ENCODE measurements at regions of chr17 and their contacts with region 1.

Region 1: GRCh38 chr17:8073627-8074484 is 13.7 kb downstream of the ALOX12B start:
- DNase-seq: peak; percentile 78
- H3K4me3 Mint-ChIP-seq: no peak overlapping the region
- H3K27ac Mint-ChIP-seq: no peak overlapping the region
- H3K4me1 Mint-ChIP-seq: peaks cover 28% of the 10 kb centered on the region
- H3K27me3 Mint-ChIP-seq: peaks cover 53% of the 10 kb centered on the region
- CTCF ChIP-seq: peak; percentile 60

Region 2: DNA sequence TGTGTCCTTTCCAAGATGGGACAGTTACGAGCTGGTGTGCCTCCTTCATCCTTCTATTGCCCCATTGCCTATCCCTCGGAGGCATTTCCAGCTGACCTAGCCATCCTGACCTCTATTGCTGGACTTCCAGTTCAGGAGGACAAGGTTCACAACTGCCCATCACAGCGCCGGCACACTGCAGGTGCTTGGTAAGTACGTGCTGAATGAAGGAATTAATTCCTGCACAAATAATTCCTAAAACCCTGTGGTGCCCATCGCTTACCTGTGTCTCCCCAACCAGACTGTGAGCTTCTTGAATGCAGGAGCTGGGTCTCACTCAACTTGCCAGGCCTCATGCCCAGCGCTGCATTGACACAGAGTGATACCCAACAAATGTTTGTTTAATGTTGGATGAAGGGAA is 22.0 kb before region 1 on chr17:
- CTCF ChIA-PET with region 1: interaction called, 10 read pairs
- intact Hi-C with region 1: no loop called
- DNase-seq: no peak
- H3K4me3 Mint-ChIP-seq: no peak overlapping the region
- H3K27ac Mint-ChIP-seq: no peak overlapping the region
- H3K4me1 Mint-ChIP-seq: peaks cover 5% of the 10 kb centered on the region
- H3K27me3 Mint-ChIP-seq: peaks cover 17% of the 10 kb centered on the region
- CTCF ChIP-seq: no peak

Region 3: DNA sequence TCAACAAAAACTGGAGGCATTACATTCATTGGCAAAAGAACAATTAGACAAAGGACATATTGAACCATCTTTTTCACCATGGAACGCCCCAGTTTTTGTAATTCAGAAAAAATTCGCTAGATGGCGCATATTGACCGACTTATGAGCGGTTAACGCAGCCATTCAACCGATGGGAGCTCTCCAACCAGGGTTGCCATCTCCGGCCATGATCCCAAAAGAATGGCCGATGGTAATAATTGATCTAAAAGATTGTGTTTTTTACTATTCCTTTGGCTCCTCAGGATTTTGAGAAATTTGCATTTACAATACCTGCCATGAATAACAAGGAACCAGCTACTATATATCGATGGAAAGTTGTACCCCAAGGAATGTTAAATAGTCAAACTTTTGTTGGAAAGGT is 13.6 kb before region 1 on chr17:
- CTCF ChIA-PET with region 1: interaction called, 12 read pairs
- intact Hi-C with region 1: no loop called
- DNase-seq: peak; percentile 67
- H3K4me3 Mint-ChIP-seq: no peak overlapping the region
- H3K27ac Mint-ChIP-seq: no peak overlapping the region
- H3K4me1 Mint-ChIP-seq: peaks cover 25% of the 10 kb centered on the region
- H3K27me3 Mint-ChIP-seq: peaks cover 75% of the 10 kb centered on the region
- CTCF ChIP-seq: peak; percentile 23

Region 4: DNA sequence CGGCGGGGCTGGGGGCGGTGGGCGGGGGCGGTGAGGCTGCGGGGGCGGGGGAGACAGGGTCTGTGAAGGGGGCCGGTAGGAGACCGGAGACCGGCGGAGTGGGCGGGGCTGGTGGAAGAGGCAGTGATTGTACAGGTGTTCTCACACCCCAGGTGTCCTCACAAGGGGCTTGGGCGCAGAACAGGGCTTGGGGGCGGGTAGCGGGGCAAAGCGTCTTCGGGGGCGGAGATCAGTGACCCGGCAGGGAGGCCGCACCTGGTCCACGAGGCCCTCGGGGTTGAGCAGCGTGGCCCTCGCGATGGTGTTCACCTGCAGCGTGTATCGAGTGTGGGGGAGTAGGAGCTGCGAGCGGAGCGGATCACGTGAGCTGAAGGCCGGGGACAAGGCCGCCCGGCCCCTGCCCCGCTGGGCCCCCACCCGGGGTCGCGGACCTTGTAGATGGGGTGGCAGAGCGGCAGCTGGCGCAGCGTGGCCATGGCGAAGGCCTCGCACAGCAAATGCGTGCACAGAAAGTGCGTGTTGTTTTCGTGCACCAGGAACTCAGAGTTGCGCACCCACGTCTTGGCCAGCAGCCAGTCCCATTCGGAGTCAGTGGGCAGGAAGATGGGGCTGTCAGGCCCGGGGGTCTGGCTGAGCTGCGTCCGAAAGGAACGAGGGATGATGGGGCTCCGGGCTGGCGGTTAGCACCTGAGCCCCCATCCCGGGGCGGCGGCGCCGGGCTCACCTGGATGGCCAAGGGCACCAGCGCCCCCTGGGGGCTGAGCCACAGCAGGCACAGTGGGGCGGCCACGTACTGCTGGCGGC is 36.0 kb after region 1 on chr17:
- CTCF ChIA-PET with region 1: interaction called, 10 read pairs
- intact Hi-C with region 1: no loop called
- DNase-seq: peak; percentile 82
- H3K4me3 Mint-ChIP-seq: peak overlapping the region; percentile 46
- H3K27ac Mint-ChIP-seq: no peak overlapping the region
- H3K4me1 Mint-ChIP-seq: peaks cover 24% of the 10 kb centered on the region
- H3K27me3 Mint-ChIP-seq: peaks cover 42% of the 10 kb centered on the region
- CTCF ChIP-seq: peak; percentile 76

Region 5: DNA sequence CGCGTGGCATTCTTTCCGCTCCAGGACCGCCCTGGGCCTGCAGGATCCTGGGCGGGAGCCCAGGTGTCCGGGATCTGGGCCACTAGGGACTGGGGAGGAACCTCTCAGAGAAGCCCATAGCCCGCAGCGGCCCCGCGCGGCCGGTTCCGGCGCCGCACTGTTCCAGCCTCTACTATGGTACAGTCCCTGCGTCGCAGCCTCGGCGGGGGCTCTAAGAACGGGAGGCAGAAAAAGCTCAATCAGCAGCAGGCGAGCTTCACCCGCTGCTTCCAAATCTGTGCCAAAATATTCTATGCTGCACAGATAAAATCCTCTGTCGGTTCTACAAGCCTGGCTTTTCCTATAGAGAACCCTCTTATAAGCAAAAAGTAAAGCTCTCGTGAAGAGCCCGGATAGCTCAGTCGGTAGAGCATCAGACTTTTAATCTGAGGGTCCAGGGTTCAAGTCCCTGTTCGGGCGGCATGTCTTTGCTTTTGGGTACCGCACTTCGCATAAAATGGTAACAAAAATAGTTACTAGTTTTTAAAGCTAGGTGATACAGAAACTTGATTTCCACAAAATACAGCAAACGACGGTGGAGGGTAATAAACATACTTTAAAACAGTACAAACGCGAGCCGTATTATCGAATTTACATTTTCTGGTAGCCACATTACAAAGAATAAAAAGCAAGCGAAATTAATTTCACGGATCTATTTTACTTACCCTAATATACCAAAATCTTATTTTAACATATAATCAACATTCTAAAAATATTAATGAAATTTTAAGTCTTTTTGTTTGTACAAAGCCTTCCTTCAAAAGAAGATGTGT is 45.1 kb after region 1 on chr17:
- CTCF ChIA-PET with region 1: interaction called, 10 read pairs
- intact Hi-C with region 1: no loop called
- DNase-seq: peak; percentile 85
- H3K4me3 Mint-ChIP-seq: peak overlapping the region; percentile 91
- H3K27ac Mint-ChIP-seq: peak overlapping the region; percentile 98
- H3K4me1 Mint-ChIP-seq: peaks cover 32% of the 10 kb centered on the region
- H3K27me3 Mint-ChIP-seq: peaks cover 56% of the 10 kb centered on the region
- CTCF ChIP-seq: peak; percentile 43

Measured in Calu3 (cell line).